B cell (primary cell): ENCODE measurements at regions of chr2 and their contacts with region 1.

Region 1: GRCh38 chr2:233033672-233034071 is 1.2 kb downstream of the NEU2 start:
- DNase-seq: no peak
- ATAC-seq: no peak
- H3K4me3 ChIP-seq: no peak overlapping the region
- H3K4me3 Mint-ChIP-seq: no peak overlapping the region
- H3K27ac ChIP-seq: no peak overlapping the region
- H3K27ac Mint-ChIP-seq: no peak overlapping the region
- H3K4me1 ChIP-seq: no peaks in the 10 kb centered on the region
- H3K4me1 Mint-ChIP-seq: no peaks in the 10 kb centered on the region
- H3K27me3 ChIP-seq: no peaks in the 10 kb centered on the region
- H3K27me3 Mint-ChIP-seq: no peaks in the 10 kb centered on the region
- CTCF ChIP-seq: no peak

Region 2: GRCh38 chr2:232854082-232854481 is 179.6 kb before region 1 on chr2:
- CTCF ChIA-PET with region 1: interaction called, 39 read pairs
- POLR2A ChIA-PET with region 1: no interaction called
- intact Hi-C with region 1: loop called (anchors 1 kb)
- DNase-seq: no peak
- ATAC-seq: no peak
- H3K4me3 ChIP-seq: no peak overlapping the region
- H3K4me3 Mint-ChIP-seq: no peak overlapping the region
- H3K27ac ChIP-seq: no peak overlapping the region
- H3K27ac Mint-ChIP-seq: no peak overlapping the region
- H3K4me1 ChIP-seq: no peaks in the 10 kb centered on the region
- H3K4me1 Mint-ChIP-seq: no peaks in the 10 kb centered on the region
- H3K27me3 ChIP-seq: no peaks in the 10 kb centered on the region
- H3K27me3 Mint-ChIP-seq: no peaks in the 10 kb centered on the region
- CTCF ChIP-seq: no peak

Region 3: GRCh38 chr2:232997749-232998665 is 35.7 kb before region 1 on chr2:
- CTCF ChIA-PET with region 1: no interaction called
- POLR2A ChIA-PET with region 1: interaction called, 17 read pairs
- intact Hi-C with region 1: no loop called
- DNase-seq: no peak
- ATAC-seq: no peak
- H3K4me3 ChIP-seq: no peak overlapping the region
- H3K4me3 Mint-ChIP-seq: no peak overlapping the region
- H3K27ac ChIP-seq: no peak overlapping the region
- H3K27ac Mint-ChIP-seq: no peak overlapping the region
- H3K4me1 ChIP-seq: no peaks in the 10 kb centered on the region
- H3K4me1 Mint-ChIP-seq: no peaks in the 10 kb centered on the region
- H3K27me3 ChIP-seq: no peaks in the 10 kb centered on the region
- H3K27me3 Mint-ChIP-seq: no peaks in the 10 kb centered on the region
- CTCF ChIP-seq: no peak